GM10248 (cell line): ENCODE measurements at regions of chr11 and their contacts with region 1.

Region 1: GRCh38 chr11:9448576-9449352 is 12.0 kb upstream of the ZNF143 start:
- DNase-seq: no peak
- CTCF ChIP-seq: no peak

Region 2: GRCh38 chr11:9384535-9385303 is 64.0 kb before region 1 on chr11 and contains the start of gene IPO7:
- CTCF ChIA-PET with region 1: no interaction called
- POLR2A ChIA-PET with region 1: no interaction called
- DNase-seq: peak; percentile 94
- CTCF ChIP-seq: peak; percentile 19

Region 3: GRCh38 chr11:9460322-9461067 is 11.7 kb after region 1 on chr11 and contains the start of gene ZNF143:
- CTCF ChIA-PET with region 1: interaction called, 3 read pairs
- POLR2A ChIA-PET with region 1: interaction called, 10 read pairs
- DNase-seq: peak; percentile 95
- CTCF ChIP-seq: peak; percentile 45